ENCODE measurements at regions of chr22 and their contacts with region 1.

Region 1: GRCh38 chr22:25959818-25960774 is 209.2 kb upstream of the SEZ6L start:
- DNase-seq: no peak
- ATAC-seq: peak; percentile 90
- H3K4me3 Mint-ChIP-seq: no peak overlapping the region
- H3K27ac Mint-ChIP-seq: no peak overlapping the region
- H3K4me1 Mint-ChIP-seq: peaks cover 7% of the 10 kb centered on the region
- H3K27me3 Mint-ChIP-seq: peaks cover 4% of the 10 kb centered on the region; the same call in 1 of the 2 replicates
- CTCF ChIP-seq: no peak

Region 2: DNA sequence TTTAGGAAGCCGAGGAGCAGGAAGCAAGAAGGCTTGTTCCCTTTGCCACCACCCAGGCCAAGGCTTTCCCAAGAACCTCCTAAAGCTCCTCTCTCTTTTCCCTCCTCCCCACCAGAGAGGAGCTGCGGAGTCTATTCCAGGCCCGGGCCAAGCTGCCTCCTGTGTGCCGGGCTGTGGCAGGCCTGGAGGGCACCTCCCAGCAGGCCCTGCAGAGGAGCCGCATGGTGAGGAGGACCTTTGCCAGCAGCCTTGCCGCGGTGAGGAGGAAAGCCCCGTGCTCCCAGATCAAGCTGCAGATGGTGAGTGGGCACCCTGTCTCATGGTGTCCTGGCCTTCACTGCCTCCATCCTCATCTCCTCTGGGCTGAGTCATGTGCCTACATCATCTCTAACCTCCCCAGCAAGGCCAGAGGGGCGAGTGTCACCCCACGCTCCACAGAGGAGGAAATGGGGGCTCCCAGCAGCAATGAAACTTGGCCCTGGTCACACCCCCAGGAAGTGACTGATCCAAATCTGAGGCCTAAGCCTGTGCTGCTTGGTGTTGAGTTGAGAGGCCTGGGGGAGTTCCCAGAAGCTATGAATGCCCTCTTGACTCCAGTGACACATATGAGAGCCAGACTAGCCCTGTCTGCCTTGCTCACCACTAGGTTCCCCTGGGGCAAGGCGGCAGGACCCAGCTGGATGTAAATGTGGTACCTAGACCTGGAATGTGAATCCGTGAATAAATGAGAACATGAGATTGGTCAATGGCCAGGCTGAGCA is 113.9 kb before region 1 on chr22:
- CTCF ChIA-PET with region 1: no interaction called
- POLR2A ChIA-PET with region 1: no interaction called
- DNase-seq: no peak
- ATAC-seq: no peak
- H3K4me3 Mint-ChIP-seq: no peak overlapping the region
- H3K27ac Mint-ChIP-seq: no peak overlapping the region
- H3K4me1 Mint-ChIP-seq: no peaks in the 10 kb centered on the region
- H3K27me3 Mint-ChIP-seq: no peaks in the 10 kb centered on the region; the same call in 1 of the 2 replicates
- CTCF ChIP-seq: no peak

Region 3: DNA sequence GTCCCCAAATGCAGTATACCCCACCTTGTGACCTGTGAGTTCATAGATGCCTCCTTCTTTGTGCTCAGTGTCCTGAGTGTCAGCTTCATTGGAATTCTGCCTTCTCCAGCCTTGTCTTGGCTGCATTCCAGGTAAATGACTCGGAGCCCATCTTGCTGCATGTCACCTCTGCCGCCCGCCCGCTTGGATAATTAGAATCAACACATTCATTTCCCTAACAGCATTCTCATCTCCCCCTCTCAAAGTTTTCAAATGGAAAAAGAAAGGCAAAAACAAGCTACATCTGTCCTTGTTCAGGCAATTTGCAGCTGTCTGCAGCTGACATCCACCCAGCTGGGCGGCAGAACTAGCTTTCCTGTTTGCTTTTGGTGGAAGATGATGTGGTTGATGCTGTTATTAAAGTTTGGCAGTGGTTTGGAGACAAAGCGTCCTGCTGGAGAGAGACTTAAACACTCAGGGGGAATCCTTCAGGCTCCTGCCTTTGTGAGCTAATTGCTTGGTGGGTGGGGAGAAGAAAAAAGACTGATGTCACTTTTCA is 10.3 kb after region 1 on chr22:
- CTCF ChIA-PET with region 1: interaction called, 12 read pairs
- POLR2A ChIA-PET with region 1: no interaction called
- DNase-seq: peak; percentile 24
- ATAC-seq: peak; percentile 60
- H3K4me3 Mint-ChIP-seq: no peak overlapping the region
- H3K27ac Mint-ChIP-seq: no peak overlapping the region
- H3K4me1 Mint-ChIP-seq: peaks cover 22% of the 10 kb centered on the region
- H3K27me3 Mint-ChIP-seq: no peaks in the 10 kb centered on the region
- CTCF ChIP-seq: no peak

Region 4: DNA sequence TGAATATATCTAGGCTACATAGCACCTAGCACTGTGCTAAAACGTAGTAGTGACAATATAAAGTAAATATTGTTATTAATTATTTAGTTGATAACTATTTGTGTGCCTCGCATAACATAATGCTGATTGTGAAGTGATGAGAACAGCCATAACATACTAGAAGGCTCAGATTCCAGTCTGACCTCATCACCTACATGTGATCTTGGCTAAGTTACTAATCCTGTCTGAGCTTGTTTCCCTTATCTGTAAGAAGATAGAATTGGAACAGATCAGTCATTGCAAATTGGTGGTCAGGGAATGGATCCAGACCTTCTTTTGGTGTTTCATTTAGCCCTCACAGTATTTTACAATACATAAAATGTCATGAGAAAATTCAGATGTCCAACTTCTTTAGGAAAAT is 105.8 kb after region 1 on chr22:
- CTCF ChIA-PET with region 1: no interaction called
- POLR2A ChIA-PET with region 1: no interaction called
- DNase-seq: no peak
- ATAC-seq: no peak
- H3K4me3 Mint-ChIP-seq: no peak overlapping the region
- H3K27ac Mint-ChIP-seq: no peak overlapping the region
- H3K4me1 Mint-ChIP-seq: peaks cover 52% of the 10 kb centered on the region
- H3K27me3 Mint-ChIP-seq: 0 out of 2 replicates have a peak, but pooled peaks cover 3% of the 10 kb centered on the region
- CTCF ChIP-seq: no peak

Measured in WTC11 (cell line).